ENCODE measurements at regions of chr16 and their contacts with region 1.

Region 1: GRCh38 chr16:50024684-50025536 is at the start of gene CNEP1R1:
- DNase-seq: peak; percentile 94
- H3K4me3 ChIP-seq: peak within 1 kb of the TSS; percentile 38 to 95 (median 72)
- H3K27ac ChIP-seq: peak within 1 kb of the TSS in 2 of 3 donors; percentile 60 to 74
- H3K4me1 ChIP-seq: peaks cover 4 to 15% of the 10 kb centered on the region in 2 donors
- H3K27me3 ChIP-seq: no peaks in the 10 kb centered on the region
- CTCF ChIP-seq: peak in 5 of 6 experiments; percentile 98 to 100 (median 100)
- POLR2A ChIP-seq: peak in 1 of 2 donors; percentile 59
- total RNA-seq, gene CNEP1R1: 7.0 to 13.1 (median 10.8) TPM

Region 2: DNA sequence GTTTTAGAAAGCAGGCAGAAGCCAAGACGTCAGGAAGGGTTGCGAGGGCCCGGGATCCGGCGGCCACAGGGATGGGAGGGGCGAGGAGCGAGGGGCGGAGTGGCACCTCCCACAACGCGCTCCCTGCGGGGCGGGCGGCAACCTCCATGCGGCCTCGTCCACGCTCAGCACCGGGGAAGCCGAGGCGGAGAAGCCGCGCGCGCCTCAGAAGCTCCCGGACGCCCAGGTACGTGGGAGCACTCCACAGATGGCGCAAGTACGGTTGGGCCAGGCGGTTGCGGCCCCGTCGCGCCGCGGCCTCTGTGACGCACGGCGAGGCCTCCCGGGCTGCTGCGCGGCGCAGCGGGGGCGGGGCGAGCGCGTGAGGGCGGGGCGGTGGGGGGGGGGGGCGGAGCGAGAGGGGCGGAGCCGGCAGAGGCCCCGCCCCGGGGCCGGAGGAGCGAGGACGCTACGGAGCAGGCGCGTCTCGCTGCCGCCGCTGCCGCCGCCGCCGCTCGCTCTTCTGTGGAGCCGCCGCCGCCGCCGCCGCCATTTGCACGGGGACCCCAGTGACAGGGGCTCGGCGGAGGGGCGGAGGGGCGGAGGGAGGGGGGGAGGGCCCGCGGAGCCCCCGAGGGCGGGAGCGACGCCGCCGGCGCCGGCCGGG is 128.0 kb after region 1 on chr16 and contains the start of gene TENT4B:
- intact Hi-C with region 1: loop called (anchors 10 kb)
- DNase-seq: peak; percentile 83 to 85
- H3K4me3 ChIP-seq: peak within 1 kb of the TSS; percentile 80 to 90 (median 87)
- H3K27ac ChIP-seq: peak within 1 kb of the TSS; percentile 85 to 97 (median 90)
- H3K4me1 ChIP-seq: peaks cover 17 to 21% of the 10 kb centered on the region in 2 donors
- H3K27me3 ChIP-seq: no peaks in the 10 kb centered on the region
- CTCF ChIP-seq: no peak
- POLR2A ChIP-seq: peak; percentile 43 to 78
- total RNA-seq, gene TENT4B: 10.0 to 14.7 (median 11.4) TPM

Region 3: GRCh38 chr16:50210266-50211038 is 185.5 kb after region 1 on chr16:
- intact Hi-C with region 1: loop called (anchors 5 kb)
- DNase-seq: peak; percentile 89
- H3K4me3 ChIP-seq: no peak overlapping the region
- H3K27ac ChIP-seq: no peak overlapping the region
- H3K4me1 ChIP-seq: peaks cover 21 to 27% of the 10 kb centered on the region in 2 donors
- H3K27me3 ChIP-seq: no peaks in the 10 kb centered on the region
- CTCF ChIP-seq: peak in 5 of 6 experiments; percentile 21 to 87 (median 71)
- POLR2A ChIP-seq: no peak

Region 4: GRCh38 chr16:50360033-50360778 is 335.3 kb after region 1 on chr16:
- intact Hi-C with region 1: loop called (anchors 5 kb)
- DNase-seq: no peak
- H3K4me3 ChIP-seq: no peak overlapping the region
- H3K27ac ChIP-seq: no peak overlapping the region
- H3K4me1 ChIP-seq: peaks cover 0 to 3% of the 10 kb centered on the region in 2 donors
- H3K27me3 ChIP-seq: no peaks in the 10 kb centered on the region
- CTCF ChIP-seq: no peak
- POLR2A ChIP-seq: no peak

Region 5: GRCh38 chr16:50665128-50665878 is 640.4 kb after region 1 on chr16:
- intact Hi-C with region 1: loop called (anchors 10 kb)
- DNase-seq: peak; percentile 66 to 79
- H3K4me3 ChIP-seq: peak overlapping the region in 1 of 3 donors; percentile 19
- H3K27ac ChIP-seq: peak overlapping the region in 1 of 3 donors; percentile 25
- H3K4me1 ChIP-seq: peaks cover 3% of the 10 kb centered on the region in 2 donors
- H3K27me3 ChIP-seq: no peaks in the 10 kb centered on the region
- CTCF ChIP-seq: peak; percentile 61 to 92 (median 78)
- POLR2A ChIP-seq: no peak